Heart left ventricle (tissue), 16 donors: ENCODE measurements at regions of chr19 and their contacts with region 1.

Region 1: GRCh38 chr19:18846862-18847548 is 15.2 kb downstream of the UPF1 start:
- DNase-seq: peak; percentile 75 to 91 (median 80)
- ATAC-seq: peak; percentile 73 to 79 (median 78)
- H3K4me3 ChIP-seq: no peak overlapping the region
- H3K27ac ChIP-seq: peak overlapping the region in 10 of 12 donors; percentile 3 to 86 (median 81)
- H3K4me1 ChIP-seq: peaks cover 28 to 87% (median 68%) of the 10 kb centered on the region in 12 donors
- H3K27me3 ChIP-seq: no peaks in the 10 kb centered on the region
- CTCF ChIP-seq: peak; percentile 76 to 94 (median 87)
- POLR2A ChIP-seq: no peak

Region 2: DNA sequence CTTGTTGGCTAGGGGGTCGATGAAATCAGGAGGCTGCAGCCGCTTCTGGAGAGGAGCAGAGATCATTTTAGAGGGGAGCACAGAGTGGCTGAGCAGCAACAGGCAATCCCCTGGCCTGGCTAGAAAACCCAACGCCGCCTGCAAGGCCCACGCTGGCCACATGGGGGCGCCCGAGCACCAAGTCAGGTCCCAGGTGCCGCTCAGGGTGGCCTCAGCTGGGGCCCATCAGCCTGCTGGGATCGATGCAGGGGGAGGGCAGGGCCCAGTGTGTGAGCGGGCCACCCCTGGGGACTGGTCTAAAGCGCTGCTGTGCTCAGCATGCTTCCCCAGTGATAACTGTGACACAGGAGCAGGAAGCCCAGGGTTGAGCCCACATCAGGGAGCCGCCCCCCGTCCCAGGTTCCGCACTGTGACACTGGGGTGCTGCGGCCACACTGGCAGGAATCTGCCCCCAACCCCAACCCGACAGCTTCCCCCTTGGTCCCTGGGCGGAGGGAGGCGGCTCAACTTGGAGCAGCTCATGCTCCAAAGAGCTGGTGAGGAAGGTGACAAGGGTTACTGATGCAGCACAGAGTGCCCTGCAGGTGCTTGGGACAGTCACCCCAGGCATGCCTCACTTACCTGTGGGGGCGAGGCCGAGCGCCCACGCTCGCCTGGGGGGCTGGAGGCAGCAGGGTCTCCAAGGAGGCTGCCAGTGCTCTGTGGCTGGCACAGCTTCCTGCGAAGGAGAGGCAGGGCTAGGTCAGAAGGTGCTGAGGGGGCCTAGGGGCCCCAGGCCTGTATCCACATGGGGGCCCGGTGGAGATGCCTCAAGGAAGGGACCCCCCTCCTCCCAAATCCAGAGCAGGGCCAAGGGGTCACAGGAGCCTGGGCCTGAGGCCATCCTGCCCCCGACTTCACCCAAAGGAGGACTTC is 395.8 kb before region 1 on chr19:
- intact Hi-C with region 1: loop called in 7 of 10 experiments (anchors 5 to 10 kb)
- DNase-seq: peak; percentile 85 to 94 (median 88)
- ATAC-seq: peak; percentile 78 to 88 (median 86)
- H3K4me3 ChIP-seq: no peak overlapping the region
- H3K27ac ChIP-seq: peak overlapping the region in 1 of 12 donors; percentile 41
- H3K4me1 ChIP-seq: peaks cover 0 to 21% (median 8%) of the 10 kb centered on the region in 12 donors
- H3K27me3 ChIP-seq: no peaks in the 10 kb centered on the region
- CTCF ChIP-seq: peak; percentile 96 to 99 (median 98)
- POLR2A ChIP-seq: no peak

Region 3: DNA sequence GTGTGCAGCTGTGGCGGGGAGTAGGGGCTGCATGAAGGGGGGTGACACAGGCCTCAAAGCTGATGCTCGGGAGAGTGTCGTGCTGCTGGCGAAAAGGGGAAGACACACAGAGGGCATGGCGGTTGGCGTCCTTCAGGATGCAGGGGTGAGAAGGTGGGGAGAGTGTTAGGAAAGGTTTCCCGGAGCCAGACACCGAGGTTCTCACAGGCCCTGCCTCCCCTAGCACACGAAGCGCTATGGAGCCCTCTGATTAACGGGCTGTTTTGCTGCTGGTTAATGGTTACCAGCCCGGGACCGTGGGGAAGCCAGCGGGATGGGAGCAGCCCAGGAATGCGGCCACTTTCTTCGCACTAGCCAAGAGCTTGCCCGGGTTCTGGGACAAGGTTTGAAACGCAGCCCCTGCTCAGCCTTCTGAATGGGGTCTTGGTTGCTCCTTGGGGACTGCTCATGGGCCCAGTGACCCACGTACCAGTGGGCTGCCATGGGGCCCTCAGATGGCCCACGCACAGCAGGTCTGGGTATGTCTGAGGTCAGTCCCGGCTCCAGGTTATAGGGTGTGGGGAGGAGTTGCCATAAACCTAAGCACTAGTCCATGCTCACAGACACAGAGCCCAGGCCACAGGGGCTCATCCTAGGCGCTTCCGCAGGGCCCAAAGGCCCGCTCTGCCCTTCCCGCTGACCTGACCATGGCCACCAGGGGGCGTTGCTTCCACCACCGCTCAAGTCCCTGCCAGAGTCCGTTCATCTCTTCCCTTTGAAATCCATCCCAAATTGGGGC is 377.7 kb before region 1 on chr19:
- intact Hi-C with region 1: loop called in 2 of 10 experiments (anchors 10 kb)
- DNase-seq: peak; percentile 58 to 85 (median 67)
- ATAC-seq: peak; percentile 5 to 42 (median 24)
- H3K4me3 ChIP-seq: no peak overlapping the region
- H3K27ac ChIP-seq: peak overlapping the region in 2 of 12 donors; percentile 13 to 43
- H3K4me1 ChIP-seq: peaks cover 13 to 72% (median 61%) of the 10 kb centered on the region in 12 donors
- H3K27me3 ChIP-seq: no peaks in the 10 kb centered on the region
- CTCF ChIP-seq: peak; percentile 61 to 86 (median 77)
- POLR2A ChIP-seq: no peak

Region 4: GRCh38 chr19:18588611-18589379 is 258.2 kb before region 1 on chr19 and contains the start of gene REX1BD:
- intact Hi-C with region 1: loop called in 5 of 10 experiments (anchors 5 kb)
- DNase-seq: peak; percentile 87 to 94 (median 90)
- ATAC-seq: peak; percentile 83 to 94 (median 90)
- H3K4me3 ChIP-seq: peak within 1 kb of the TSS; percentile 66 to 98 (median 90)
- H3K27ac ChIP-seq: peak within 1 kb of the TSS; percentile 75 to 97 (median 92)
- H3K4me1 ChIP-seq: peaks cover 0 to 47% (median 19%) of the 10 kb centered on the region in 12 donors
- H3K27me3 ChIP-seq: no peaks in the 10 kb centered on the region
- CTCF ChIP-seq: peak; percentile 83 to 98 (median 92)
- POLR2A ChIP-seq: peak in 1 of 2 donors; percentile 70
- total RNA-seq, gene REX1BD: 42.9 to 205 (median 68.2) TPM

Region 5: GRCh38 chr19:18683213-18683939 is 163.6 kb before region 1 on chr19 and contains the start of gene CRTC1:
- intact Hi-C with region 1: loop called in 3 of 10 experiments (anchors 10 kb)
- DNase-seq: peak; percentile 91 to 95 (median 92)
- ATAC-seq: peak; percentile 89 to 92 (median 91)
- H3K4me3 ChIP-seq: peak within 1 kb of the TSS; percentile 25 to 75 (median 64)
- H3K27ac ChIP-seq: peak within 1 kb of the TSS in 11 of 12 donors; percentile 77 to 91 (median 86)
- H3K4me1 ChIP-seq: peaks cover 4 to 28% (median 12%) of the 10 kb centered on the region in 12 donors
- H3K27me3 ChIP-seq: no peaks in the 10 kb centered on the region
- CTCF ChIP-seq: peak in 3 of 12 donors; percentile 7 to 19 (median 10)
- POLR2A ChIP-seq: peak in 1 of 2 donors; percentile 71
- total RNA-seq, gene CRTC1: 3.8 to 10.2 (median 8.2) TPM